Activated T-helper 2 cell treated with anti-CD3 and anti-CD28 coated beads, Interferon-gamma antibody, Interleukin-2, Interleukin-4, amounts not matched to agents 10 μg/mL and 5 μg/mL and 100 μg/mL, durations not matched to agents 14 hours and 24 hours and 36 hours (primary cell): ENCODE measurements at regions of chr13 and their contacts with region 1.

Region 1: GRCh38 chr13:75326173-75327134 is 155.5 kb downstream of the TBC1D4 start:
- DNase-seq: peak; percentile 56
- H3K4me3 Mint-ChIP-seq: peak overlapping the region; percentile 86
- H3K27ac Mint-ChIP-seq: peak overlapping the region; percentile 95
- H3K4me1 Mint-ChIP-seq: peaks cover 54% of the 10 kb centered on the region
- H3K27me3 Mint-ChIP-seq: no peaks in the 10 kb centered on the region

Region 2: GRCh38 chr13:75226733-75227435 is 99.6 kb before region 1 on chr13:
- intact Hi-C with region 1: loop called (anchors 2 kb)
- DNase-seq: no peak
- H3K4me3 Mint-ChIP-seq: no peak overlapping the region
- H3K27ac Mint-ChIP-seq: peak overlapping the region; percentile 0
- H3K4me1 Mint-ChIP-seq: peaks cover 27% of the 10 kb centered on the region
- H3K27me3 Mint-ChIP-seq: peaks cover 3% of the 10 kb centered on the region

Region 3: DNA sequence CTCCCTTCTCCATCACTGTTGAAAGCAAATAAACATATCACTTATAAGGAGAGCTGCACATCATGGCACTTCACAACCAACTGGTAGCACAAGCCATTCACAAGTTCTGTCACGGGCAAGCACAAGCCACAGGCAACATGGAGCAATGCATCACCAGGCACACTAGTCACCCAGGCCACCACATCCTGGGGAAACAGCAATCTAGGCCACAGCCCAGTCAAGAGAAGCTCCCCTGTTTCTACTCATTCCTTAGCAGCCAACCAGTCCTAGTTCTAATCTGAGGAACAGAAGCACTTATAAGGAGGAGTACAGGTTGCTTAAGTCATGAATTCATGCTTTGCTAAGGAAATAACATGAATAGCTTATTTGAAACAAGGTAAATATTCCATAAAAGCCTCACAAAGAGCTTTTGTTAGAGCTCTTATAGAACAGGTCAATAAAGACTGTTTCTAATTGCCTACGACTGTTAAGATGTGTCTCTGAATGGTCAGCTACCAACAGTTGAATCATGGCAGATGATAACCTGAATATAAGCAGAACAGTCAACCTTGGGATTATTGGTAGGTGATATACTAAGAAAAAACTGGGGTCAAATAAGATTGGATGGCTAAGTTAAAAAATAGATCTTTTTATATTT is 13.5 kb before region 1 on chr13:
- intact Hi-C with region 1: loop called (anchors 1 kb)
- DNase-seq: peak; percentile 46
- H3K4me3 Mint-ChIP-seq: no peak overlapping the region
- H3K27ac Mint-ChIP-seq: peak overlapping the region; percentile 82
- H3K4me1 Mint-ChIP-seq: peaks cover 61% of the 10 kb centered on the region
- H3K27me3 Mint-ChIP-seq: no peaks in the 10 kb centered on the region

Region 4: DNA sequence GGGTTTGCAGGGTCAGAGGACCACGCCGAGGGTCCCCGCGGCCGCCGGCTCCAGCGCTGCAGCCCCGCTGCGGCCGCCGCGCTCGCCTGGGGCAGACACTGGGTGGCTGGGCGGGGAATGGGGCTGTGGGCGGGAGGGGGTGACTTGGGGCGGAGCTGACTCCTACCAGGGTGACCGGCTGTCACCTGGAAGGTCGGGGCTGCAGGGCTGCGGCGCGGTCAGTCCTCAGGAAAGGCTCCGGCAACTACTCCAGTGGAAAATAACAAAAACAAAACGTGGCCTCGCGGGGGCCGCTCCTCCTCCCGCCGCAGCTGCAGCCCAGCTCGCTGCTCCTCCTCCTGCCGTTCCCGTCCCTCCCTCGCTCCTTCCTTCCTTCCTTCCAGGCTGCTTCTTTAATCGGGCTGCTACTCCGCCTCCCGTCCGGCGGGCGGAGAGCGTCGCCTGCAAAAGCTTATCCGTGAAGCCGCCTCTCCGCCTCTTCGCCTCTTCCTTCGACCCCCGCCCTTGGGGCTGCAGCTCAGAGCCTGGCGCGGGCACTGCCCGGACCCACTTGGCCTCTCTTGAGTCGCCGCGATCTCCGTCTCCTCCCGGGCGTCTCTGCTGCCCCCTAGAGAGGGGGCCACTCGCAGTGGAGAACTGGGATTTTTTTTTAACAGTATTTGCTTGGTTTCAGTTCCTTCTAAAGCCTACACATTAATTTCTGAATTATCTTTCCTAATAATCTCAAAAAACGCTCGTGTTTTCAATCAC is 155.8 kb after region 1 on chr13 and contains the start of gene TBC1D4:
- intact Hi-C with region 1: loop called (anchors 2 kb)
- DNase-seq: peak; percentile 50
- H3K4me3 Mint-ChIP-seq: peak within 1 kb of the TSS; percentile 94
- H3K27ac Mint-ChIP-seq: peak within 1 kb of the TSS; percentile 73
- H3K4me1 Mint-ChIP-seq: peaks cover 25% of the 10 kb centered on the region
- H3K27me3 Mint-ChIP-seq: peaks cover 44% of the 10 kb centered on the region
- total RNA-seq, gene TBC1D4: 36.4 and 39.7 TPM in 2 replicates

Region 5: GRCh38 chr13:75521956-75522355 is 195.5 kb after region 1 on chr13:
- intact Hi-C with region 1: no loop called
- DNase-seq: no peak
- H3K4me3 Mint-ChIP-seq: no peak overlapping the region
- H3K27ac Mint-ChIP-seq: no peak overlapping the region
- H3K4me1 Mint-ChIP-seq: peaks cover 2% of the 10 kb centered on the region
- H3K27me3 Mint-ChIP-seq: no peaks in the 10 kb centered on the region

Region 6: DNA sequence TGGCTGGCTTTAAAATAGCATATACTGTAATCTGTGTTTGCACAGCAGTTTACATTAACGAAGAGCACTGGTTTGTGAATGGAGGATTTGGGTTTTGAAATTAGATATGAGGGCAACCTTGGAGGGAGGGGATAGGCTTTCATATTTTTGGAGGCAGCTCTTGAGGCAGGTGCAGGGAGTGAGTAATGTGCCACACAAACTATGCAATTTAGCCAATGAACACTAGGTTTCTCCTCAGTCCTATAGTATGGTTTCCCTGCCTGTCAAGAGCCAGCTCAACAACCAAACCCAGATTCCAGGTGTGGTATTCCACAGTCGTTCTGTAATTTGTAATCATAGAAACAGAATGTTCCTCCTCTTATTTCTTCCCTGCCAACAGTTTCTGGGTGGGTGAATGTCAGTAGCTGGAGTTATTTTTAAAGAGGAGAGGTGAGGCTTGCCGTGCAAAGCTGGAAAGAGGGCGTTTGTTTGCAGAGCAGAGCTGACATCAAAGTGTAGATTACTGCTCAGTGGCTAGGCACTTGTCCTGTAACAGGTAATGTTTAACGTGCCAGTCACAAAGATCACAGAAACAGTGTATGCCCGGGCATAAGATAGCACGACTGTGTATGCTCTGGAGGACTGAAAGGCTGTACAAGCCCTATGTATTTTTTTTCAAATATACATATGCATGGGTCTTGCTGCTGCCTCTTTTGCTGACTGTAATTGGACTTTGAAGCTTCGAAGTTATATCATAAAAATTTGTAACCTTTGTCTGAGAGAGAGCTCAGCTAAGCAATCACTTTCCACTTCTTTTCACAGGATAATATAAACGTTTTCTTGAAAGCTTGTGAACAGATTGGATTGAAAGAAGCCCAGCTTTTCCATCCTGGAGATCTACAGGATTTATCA is 433.9 kb after region 1 on chr13:
- intact Hi-C with region 1: loop called (anchors 5 kb)
- DNase-seq: no peak
- H3K4me3 Mint-ChIP-seq: peak overlapping the region; percentile 71
- H3K27ac Mint-ChIP-seq: peak overlapping the region; percentile 63
- H3K4me1 Mint-ChIP-seq: peaks cover 65% of the 10 kb centered on the region
- H3K27me3 Mint-ChIP-seq: no peaks in the 10 kb centered on the region